ENCODE measurements at regions of chr19 and their contacts with region 1.

Region 1: DNA sequence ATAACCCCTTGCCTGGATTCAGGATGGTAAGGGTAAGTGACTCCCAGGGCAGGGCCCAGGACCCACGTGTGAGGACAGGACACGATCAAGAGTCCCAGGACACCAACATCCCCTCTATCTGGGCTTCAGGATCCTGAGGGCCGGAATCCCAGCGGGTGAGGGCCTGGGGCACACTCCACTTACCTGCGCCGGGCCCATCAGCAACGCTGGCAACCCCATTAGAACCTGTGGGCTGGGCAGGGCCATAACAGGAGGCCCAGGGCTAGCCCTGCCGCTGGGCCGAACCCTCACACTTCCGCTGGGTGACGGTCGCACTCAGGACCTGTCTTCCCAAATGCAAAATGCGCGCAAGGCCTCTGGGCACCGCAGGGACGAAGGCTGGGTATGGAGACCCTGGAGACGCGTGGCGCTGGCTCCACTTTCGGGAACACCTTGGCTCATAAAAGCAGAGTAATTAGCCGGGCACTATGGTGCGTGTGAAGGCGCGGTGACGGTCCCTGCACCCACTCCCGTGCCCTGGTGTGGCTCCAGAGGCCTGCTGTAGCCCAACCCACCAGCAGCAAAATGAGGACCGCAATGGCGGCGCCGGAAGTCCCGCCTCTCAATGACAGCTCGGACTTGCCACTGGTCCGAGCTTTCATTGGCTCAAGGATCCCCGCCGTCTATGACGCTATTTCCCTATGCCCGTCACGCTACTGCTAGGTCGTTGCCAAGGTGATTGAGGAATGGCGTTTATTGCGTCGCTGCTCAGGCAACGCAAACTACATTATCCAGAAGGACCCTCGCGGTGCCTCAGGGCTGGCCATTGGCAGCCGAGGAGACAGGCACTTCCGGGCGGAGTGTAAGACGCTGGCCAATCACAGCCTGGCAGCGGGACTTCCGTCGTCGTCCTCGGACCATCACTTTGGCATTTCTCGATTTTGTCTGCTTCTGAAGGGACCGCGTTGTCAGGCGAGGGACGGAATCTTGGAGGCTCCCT is at the start of gene ZNF132:
- DNase-seq: peak; percentile 84 to 100 (median 92)
- ATAC-seq: peak; percentile 96
- H3K4me3 ChIP-seq: peak within 1 kb of the TSS; percentile 62
- H3K4me3 Mint-ChIP-seq: peak within 1 kb of the TSS; percentile 97
- H3K27ac ChIP-seq: peak within 1 kb of the TSS; percentile 68 to 77
- H3K27ac Mint-ChIP-seq: peak within 1 kb of the TSS; percentile 88
- H3K4me1 ChIP-seq: peaks cover 23% of the 10 kb centered on the region
- H3K4me1 Mint-ChIP-seq: peaks cover 27% of the 10 kb centered on the region
- H3K27me3 ChIP-seq: no peaks in the 10 kb centered on the region
- H3K27me3 Mint-ChIP-seq: peaks cover 11% of the 10 kb centered on the region
- CTCF ChIP-seq: no peak
- total RNA-seq, gene ZNF132: 1.0 to 1.4 TPM

Region 2: DNA sequence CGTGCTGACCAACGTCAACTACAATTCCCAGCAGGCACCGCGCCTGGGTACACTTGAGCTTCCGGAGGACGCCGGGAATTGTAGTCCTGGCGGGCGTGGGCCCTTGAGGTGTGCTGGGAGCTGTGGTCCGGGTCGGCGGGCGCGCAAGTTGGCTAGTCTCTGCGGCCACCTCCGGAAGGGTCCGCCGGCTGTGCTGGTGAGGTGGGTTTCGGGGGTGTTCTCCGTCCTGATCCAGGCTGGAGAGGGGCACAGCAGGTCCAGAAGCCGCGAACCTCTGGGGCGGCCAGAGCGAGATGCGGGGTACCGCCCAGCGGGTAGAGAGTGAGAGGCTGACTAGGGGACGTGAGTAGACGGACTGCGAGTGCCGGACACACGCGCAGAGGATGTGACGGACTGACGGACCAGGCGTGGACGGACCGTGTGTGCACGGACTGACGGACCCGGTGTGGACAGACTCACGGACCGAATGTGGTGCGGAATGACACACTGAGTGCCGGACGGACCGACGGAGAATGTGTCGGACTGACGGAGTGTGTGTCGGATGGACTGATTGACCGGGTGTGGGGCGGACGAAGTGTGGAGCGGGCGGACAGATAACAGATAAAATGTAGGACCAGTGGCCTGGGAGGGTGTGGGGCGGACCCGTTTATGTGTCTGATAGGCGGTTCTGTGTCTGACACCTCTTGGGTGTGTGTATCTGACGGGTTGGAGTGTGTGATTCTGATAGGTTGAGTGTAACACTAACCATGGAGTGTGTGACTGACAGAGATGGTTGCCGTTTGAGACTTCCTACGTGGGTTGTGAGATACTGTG is 112.7 kb before region 1 on chr19 and contains the start of gene ZSCAN22:
- CTCF ChIA-PET with region 1: no interaction called
- POLR2A ChIA-PET with region 1: interaction called, 3 read pairs
- intact Hi-C with region 1: loop called in 1 of 2 experiments (anchors 1 kb)
- DNase-seq: peak; percentile 76 to 94 (median 86)
- ATAC-seq: peak; percentile 88
- H3K4me3 ChIP-seq: peak within 1 kb of the TSS; percentile 86
- H3K4me3 Mint-ChIP-seq: no peak within 1 kb of the TSS
- H3K27ac ChIP-seq: peak within 1 kb of the TSS; percentile 65
- H3K27ac Mint-ChIP-seq: no peak within 1 kb of the TSS
- H3K4me1 ChIP-seq: peaks cover 22% of the 10 kb centered on the region
- H3K4me1 Mint-ChIP-seq: peaks cover 4% of the 10 kb centered on the region
- H3K27me3 ChIP-seq: no peaks in the 10 kb centered on the region
- H3K27me3 Mint-ChIP-seq: no peaks in the 10 kb centered on the region
- CTCF ChIP-seq: no peak
- total RNA-seq, gene ZSCAN22: 0.77 to 0.81 TPM

Region 3: GRCh38 chr19:58408152-58409009 is 31.5 kb before region 1 on chr19 and contains the start of gene ZNF584:
- CTCF ChIA-PET with region 1: interaction called, 6 read pairs
- POLR2A ChIA-PET with region 1: interaction called, 10 read pairs
- intact Hi-C with region 1: loop called (anchors 2 to 5 kb)
- DNase-seq: peak; percentile 85 to 96 (median 92)
- ATAC-seq: peak; percentile 98
- H3K4me3 ChIP-seq: peak within 1 kb of the TSS; percentile 92
- H3K4me3 Mint-ChIP-seq: peak within 1 kb of the TSS; percentile 99
- H3K27ac ChIP-seq: peak within 1 kb of the TSS; percentile 70 to 77
- H3K27ac Mint-ChIP-seq: peak within 1 kb of the TSS; percentile 94
- H3K4me1 ChIP-seq: peaks cover 27% of the 10 kb centered on the region
- H3K4me1 Mint-ChIP-seq: peaks cover 39% of the 10 kb centered on the region
- H3K27me3 ChIP-seq: no peaks in the 10 kb centered on the region
- H3K27me3 Mint-ChIP-seq: no peaks in the 10 kb centered on the region
- CTCF ChIP-seq: no peak
- total RNA-seq, gene ZNF584: 1.7 to 1.8 TPM

Region 4: GRCh38 chr19:58466760-58467589 is 27.1 kb after region 1 on chr19 and contains the start of gene ZNF324:
- CTCF ChIA-PET with region 1: no interaction called
- POLR2A ChIA-PET with region 1: interaction called, 3 read pairs
- intact Hi-C with region 1: loop called in 1 of 2 experiments (anchors 1 kb)
- DNase-seq: peak; percentile 94 to 98 (median 97)
- ATAC-seq: peak; percentile 93
- H3K4me3 ChIP-seq: peak within 1 kb of the TSS; percentile 68
- H3K4me3 Mint-ChIP-seq: peak within 1 kb of the TSS; percentile 93
- H3K27ac ChIP-seq: peak within 1 kb of the TSS; percentile 62 to 81
- H3K27ac Mint-ChIP-seq: peak within 1 kb of the TSS; percentile 83
- H3K4me1 ChIP-seq: peaks cover 20% of the 10 kb centered on the region
- H3K4me1 Mint-ChIP-seq: peaks cover 22% of the 10 kb centered on the region
- H3K27me3 ChIP-seq: no peaks in the 10 kb centered on the region
- H3K27me3 Mint-ChIP-seq: no peaks in the 10 kb centered on the region
- CTCF ChIP-seq: no peak
- total RNA-seq, gene ZNF324: 24.3 to 25.2 TPM

Region 5: DNA sequence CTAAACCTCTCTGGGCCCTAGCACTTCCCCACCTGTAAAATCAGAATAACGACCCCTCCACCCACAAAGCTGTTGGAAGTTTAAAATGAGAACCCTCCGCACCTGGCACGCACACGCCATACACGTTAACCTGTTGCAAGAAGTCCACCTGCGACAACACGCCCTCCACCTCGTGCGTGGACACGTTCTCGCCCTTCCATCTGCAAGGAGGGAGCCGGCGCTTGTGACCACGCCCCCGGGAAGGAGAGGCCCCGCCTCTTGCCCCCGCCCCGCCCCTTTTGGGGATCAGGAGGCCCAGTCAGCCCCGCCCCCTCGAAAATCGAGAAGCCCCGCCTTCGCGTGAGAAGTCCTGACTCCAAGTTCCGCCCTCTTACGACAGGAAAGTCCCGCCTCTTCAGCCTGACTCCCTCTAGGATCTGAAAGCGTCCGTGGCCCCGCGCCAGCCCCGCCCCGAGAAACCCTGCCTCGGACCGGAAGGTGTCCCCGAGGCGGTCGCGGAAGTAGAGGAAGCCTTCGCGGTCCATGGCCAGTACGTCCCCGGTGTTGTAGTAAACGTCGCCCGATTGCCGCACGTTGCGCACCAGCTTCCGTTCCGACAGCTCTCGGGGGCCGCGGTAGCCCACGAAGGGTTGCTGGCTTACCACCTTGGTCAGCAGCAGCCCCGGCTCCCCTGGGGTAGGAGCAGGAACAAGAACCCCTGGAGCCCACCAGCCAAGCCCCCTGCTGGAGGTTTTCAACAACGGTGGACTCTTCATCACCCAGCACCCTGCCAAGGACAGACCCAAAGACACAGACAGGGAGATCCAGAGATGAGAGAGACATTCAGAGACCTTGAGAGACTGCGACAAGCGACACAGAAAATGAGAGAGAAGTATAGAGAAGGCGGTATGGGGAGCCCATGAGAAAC is 59.4 kb after region 1 on chr19:
- CTCF ChIA-PET with region 1: no interaction called
- POLR2A ChIA-PET with region 1: no interaction called
- intact Hi-C with region 1: loop called in 1 of 2 experiments (anchors 1 kb)
- DNase-seq: peak; percentile 85 to 98 (median 92)
- ATAC-seq: peak; percentile 83
- H3K4me3 ChIP-seq: peak overlapping the region; percentile 57
- H3K4me3 Mint-ChIP-seq: peak overlapping the region; percentile 94
- H3K27ac ChIP-seq: peak overlapping the region; percentile 57 to 79
- H3K27ac Mint-ChIP-seq: peak overlapping the region; percentile 86
- H3K4me1 ChIP-seq: peaks cover 25% of the 10 kb centered on the region
- H3K4me1 Mint-ChIP-seq: peaks cover 16% of the 10 kb centered on the region
- H3K27me3 ChIP-seq: no peaks in the 10 kb centered on the region
- H3K27me3 Mint-ChIP-seq: no peaks in the 10 kb centered on the region
- CTCF ChIP-seq: no peak